ENCODE measurements at regions of chr2 and their contacts with region 1.

Region 1: GRCh38 chr2:7567646-7568045 is 650.4 kb downstream of the RNF144A start:
- DNase-seq: peak; percentile 65
- ATAC-seq: peak; percentile 98
- H3K4me3 Mint-ChIP-seq: peak overlapping the region; percentile 61
- H3K27ac Mint-ChIP-seq: peak overlapping the region; percentile 92
- H3K4me1 Mint-ChIP-seq: peaks cover 48% of the 10 kb centered on the region
- H3K27me3 Mint-ChIP-seq: no peaks in the 10 kb centered on the region

Region 2: GRCh38 chr2:7427293-7428060 is 140.2 kb before region 1 on chr2:
- POLR2A ChIA-PET with region 1: interaction called, 15 read pairs
- DNase-seq: no peak
- ATAC-seq: no peak
- H3K4me3 Mint-ChIP-seq: peak overlapping the region; percentile 34
- H3K27ac Mint-ChIP-seq: peak overlapping the region; percentile 70
- H3K4me1 Mint-ChIP-seq: peaks cover 40% of the 10 kb centered on the region
- H3K27me3 Mint-ChIP-seq: no peaks in the 10 kb centered on the region

Region 3: GRCh38 chr2:7450188-7450832 is 117.3 kb before region 1 on chr2:
- POLR2A ChIA-PET with region 1: interaction called, 25 read pairs
- DNase-seq: no peak
- ATAC-seq: peak; percentile 45
- H3K4me3 Mint-ChIP-seq: peak overlapping the region; percentile 73
- H3K27ac Mint-ChIP-seq: peak overlapping the region; percentile 92
- H3K4me1 Mint-ChIP-seq: peaks cover 70% of the 10 kb centered on the region
- H3K27me3 Mint-ChIP-seq: no peaks in the 10 kb centered on the region

Region 4: DNA sequence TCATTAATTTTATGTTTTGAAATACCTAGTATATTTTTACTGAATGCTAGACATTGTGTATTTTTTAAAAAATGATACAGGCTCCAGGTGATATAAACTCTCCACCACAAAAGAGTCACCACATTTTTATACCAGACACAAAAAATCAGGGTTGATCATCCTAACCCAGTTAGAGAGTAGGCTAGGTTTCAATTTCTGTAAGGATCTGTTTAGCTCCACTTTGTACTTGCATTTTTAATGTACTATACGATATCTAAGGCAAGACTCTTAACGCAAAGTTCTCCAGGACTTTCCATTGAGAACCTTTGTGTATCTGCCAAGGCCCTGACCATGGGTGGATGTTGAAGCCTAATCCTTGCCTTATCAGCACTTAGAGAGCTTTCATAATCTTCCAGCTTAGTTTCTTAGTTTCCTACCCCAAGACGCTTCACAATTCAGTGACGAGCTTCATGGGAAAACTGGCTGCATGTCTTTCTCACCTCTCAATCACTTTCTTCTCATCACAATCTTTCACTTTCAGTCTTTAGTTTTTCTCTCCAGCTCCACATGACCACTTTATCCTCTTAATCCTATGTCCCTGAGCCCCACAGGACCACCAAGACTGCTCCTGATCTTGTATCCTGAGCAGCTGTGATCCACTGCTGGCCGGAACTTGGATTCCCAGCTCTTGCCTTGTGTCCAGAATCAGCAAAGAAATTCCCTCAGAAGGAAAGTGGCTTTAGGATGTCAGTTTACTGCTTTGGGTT is 14.6 kb before region 1 on chr2:
- POLR2A ChIA-PET with region 1: no interaction called
- DNase-seq: no peak
- ATAC-seq: no peak
- H3K4me3 Mint-ChIP-seq: peak overlapping the region; percentile 29
- H3K27ac Mint-ChIP-seq: peak overlapping the region; percentile 17
- H3K4me1 Mint-ChIP-seq: peaks cover 14% of the 10 kb centered on the region
- H3K27me3 Mint-ChIP-seq: no peaks in the 10 kb centered on the region

Region 5: GRCh38 chr2:7672027-7672684 is 104.5 kb after region 1 on chr2:
- POLR2A ChIA-PET with region 1: interaction called, 12 read pairs
- DNase-seq: peak; percentile 74
- ATAC-seq: peak; percentile 86
- H3K4me3 Mint-ChIP-seq: peak overlapping the region; percentile 79
- H3K27ac Mint-ChIP-seq: peak overlapping the region; percentile 95
- H3K4me1 Mint-ChIP-seq: peaks cover 50% of the 10 kb centered on the region
- H3K27me3 Mint-ChIP-seq: no peaks in the 10 kb centered on the region

Region 6: GRCh38 chr2:7725171-7725849 is 157.7 kb after region 1 on chr2:
- POLR2A ChIA-PET with region 1: interaction called, 24 read pairs
- DNase-seq: no peak
- ATAC-seq: peak; percentile 88
- H3K4me3 Mint-ChIP-seq: peak overlapping the region; percentile 95
- H3K27ac Mint-ChIP-seq: peak overlapping the region; percentile 92
- H3K4me1 Mint-ChIP-seq: peaks cover 40% of the 10 kb centered on the region
- H3K27me3 Mint-ChIP-seq: no peaks in the 10 kb centered on the region